H1 (cell line): ENCODE measurements at regions of chr2 and their contacts with region 1.

Region 1: GRCh38 chr2:223727562-223727961 is 109.8 kb downstream of the AP1S3 start:
- DNase-seq: no peak
- H3K4me3 ChIP-seq: no peak overlapping the region
- H3K27ac ChIP-seq: no peak overlapping the region
- H3K4me1 ChIP-seq: peaks cover 8 to 29% (median 20%) of the 10 kb centered on the region in 4 experiments; a peak in 6 of 7 replicates
- H3K27me3 ChIP-seq: no peaks in the 10 kb centered on the region
- CTCF ChIP-seq: peak in 2 of 3 experiments; percentile 64 to 78; a peak in 3 of 4 replicates
- EP300 ChIP-seq: no peak
- POLR2A ChIP-seq: no peak
- RAD21 ChIP-seq: peak; percentile 58 to 68

Region 2: GRCh38 chr2:223604231-223604630 is 123.3 kb before region 1 on chr2:
- CTCF ChIA-PET with region 1: no interaction called
- POLR2A ChIA-PET with region 1: no interaction called
- DNase-seq: no peak
- H3K4me3 ChIP-seq: no peak overlapping the region
- H3K27ac ChIP-seq: no peak overlapping the region
- H3K4me1 ChIP-seq: no peaks in the 10 kb centered on the region
- H3K27me3 ChIP-seq: no peaks in the 10 kb centered on the region
- CTCF ChIP-seq: no peak
- EP300 ChIP-seq: no peak
- POLR2A ChIP-seq: no peak
- RAD21 ChIP-seq: no peak

Region 3: GRCh38 chr2:223744573-223744972 is 17.0 kb after region 1 on chr2:
- CTCF ChIA-PET with region 1: interaction called, 20 read pairs
- POLR2A ChIA-PET with region 1: interaction called, 5 read pairs
- DNase-seq: no peak
- H3K4me3 ChIP-seq: no peak overlapping the region
- H3K27ac ChIP-seq: no peak overlapping the region
- H3K4me1 ChIP-seq: no peaks in the 10 kb centered on the region; a peak in 1 of 7 replicates
- H3K27me3 ChIP-seq: no peaks in the 10 kb centered on the region
- CTCF ChIP-seq: no peak
- EP300 ChIP-seq: no peak
- POLR2A ChIP-seq: no peak
- RAD21 ChIP-seq: no peak